Mucosa of descending colon (tissue), 3 donors: ENCODE measurements at regions of chr3 and their contacts with region 1.

Region 1: DNA sequence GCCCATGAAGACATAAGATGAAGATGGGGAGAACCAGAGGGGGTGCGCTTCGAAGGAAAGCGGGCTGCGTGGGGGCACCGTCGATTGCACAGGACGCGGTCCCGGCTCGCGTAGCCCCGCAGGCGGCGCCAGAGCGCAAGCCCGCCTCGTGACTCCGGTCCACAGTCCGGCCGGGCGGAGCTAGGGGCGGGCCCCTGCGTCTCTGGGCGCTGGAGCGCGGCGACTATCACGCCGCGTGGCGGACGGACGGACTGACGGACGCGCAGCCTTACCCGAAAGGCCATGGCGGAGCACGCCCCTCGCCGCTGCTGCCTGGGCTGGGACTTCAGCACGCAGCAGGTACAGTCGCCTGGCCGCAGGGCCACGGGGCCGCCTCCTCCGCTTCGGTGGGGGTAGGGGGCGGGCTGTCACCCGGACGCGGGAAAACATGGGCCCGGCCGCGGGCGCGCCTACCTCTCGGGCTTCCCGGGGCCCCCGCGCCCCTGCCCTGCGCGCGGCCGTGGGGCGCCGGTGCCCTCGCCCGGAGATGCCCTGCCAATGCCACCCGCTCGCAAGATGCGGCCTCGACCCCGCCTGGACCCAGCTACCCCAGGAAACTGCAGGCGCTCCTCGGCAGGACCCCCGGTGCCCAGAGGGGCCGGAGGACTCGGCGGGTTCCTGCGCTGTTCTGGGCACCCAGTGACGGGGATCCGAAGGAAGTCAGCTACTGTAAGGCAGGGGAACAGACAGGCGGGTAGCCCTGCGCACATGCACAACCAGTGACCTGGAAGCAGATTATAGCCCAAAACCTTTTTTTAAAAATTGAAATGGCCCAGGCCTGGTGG is at the start of gene XYLB:
- DNase-seq: peak; percentile 91 to 94 (median 93)
- ATAC-seq: peak; percentile 99
- H3K4me3 ChIP-seq: peak within 1 kb of the TSS; percentile 51
- H3K4me1 ChIP-seq: peaks cover 4% of the 10 kb centered on the region
- CTCF ChIP-seq: peak; percentile 68
- total RNA-seq, gene XYLB: 9.7 to 27.7 (median 16.3) TPM

Region 2: DNA sequence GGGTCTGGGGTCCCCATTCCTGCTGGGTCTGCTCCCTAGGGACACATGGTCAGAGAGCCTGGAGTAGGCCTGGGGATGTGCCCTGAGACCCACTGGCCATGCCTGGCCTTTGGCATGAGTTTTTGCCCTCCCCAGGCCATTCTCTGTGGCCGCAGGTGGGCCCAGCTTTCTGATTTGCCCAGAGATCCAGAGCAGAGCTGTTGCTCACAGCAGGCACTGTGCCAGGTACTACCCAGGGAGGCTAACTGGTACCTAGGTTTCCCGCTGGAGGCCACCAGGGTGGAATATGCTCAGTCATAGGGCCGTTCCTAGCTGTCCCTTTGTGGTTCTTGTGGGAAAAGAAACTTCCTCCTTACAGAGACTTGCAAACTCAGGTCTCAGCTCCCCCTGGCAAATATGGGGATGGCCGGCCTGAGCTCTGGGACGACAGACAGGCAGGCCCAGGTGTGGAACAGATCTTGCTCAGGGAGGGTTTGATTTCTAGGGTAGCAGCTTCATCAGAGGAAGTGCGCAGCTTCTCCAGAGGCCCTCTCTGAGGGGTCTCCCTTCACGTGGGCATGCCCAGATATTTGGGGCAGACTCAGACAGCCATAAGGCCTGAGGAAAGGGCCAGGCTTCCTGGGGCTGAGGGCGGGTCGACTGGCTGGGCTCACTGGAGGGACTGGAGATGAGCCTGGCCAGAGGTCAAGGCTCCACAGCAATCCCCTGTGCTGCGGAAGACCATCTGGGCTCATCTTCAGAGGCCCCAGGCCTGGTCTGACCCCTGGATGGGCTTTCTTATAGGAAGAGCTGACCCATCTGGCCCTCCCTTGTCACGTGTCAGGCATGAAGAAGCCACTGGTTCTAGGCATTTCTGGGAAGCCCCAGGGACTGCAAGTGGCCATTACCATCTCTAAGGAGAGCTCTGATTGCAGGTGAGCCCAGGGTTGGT is 237.9 kb before region 1 on chr3:
- intact Hi-C with region 1: no loop called
- DNase-seq: peak in 1 of 3 donors; percentile 49
- ATAC-seq: peak; percentile 26
- H3K4me3 ChIP-seq: no peak overlapping the region
- H3K4me1 ChIP-seq: no peaks in the 10 kb centered on the region
- CTCF ChIP-seq: no peak

Region 3: GRCh38 chr3:38479431-38480092 is 132.8 kb after region 1 on chr3:
- intact Hi-C with region 1: loop called (anchors 5 kb)
- DNase-seq: peak in 2 of 3 donors; percentile 58 to 75
- ATAC-seq: peak; percentile 90
- H3K4me3 ChIP-seq: no peak overlapping the region
- H3K4me1 ChIP-seq: no peaks in the 10 kb centered on the region
- CTCF ChIP-seq: peak; percentile 43